CD4-positive, alpha-beta T cell (primary cell): ENCODE measurements at regions of chr14 and their contacts with region 1.

Region 1: DNA sequence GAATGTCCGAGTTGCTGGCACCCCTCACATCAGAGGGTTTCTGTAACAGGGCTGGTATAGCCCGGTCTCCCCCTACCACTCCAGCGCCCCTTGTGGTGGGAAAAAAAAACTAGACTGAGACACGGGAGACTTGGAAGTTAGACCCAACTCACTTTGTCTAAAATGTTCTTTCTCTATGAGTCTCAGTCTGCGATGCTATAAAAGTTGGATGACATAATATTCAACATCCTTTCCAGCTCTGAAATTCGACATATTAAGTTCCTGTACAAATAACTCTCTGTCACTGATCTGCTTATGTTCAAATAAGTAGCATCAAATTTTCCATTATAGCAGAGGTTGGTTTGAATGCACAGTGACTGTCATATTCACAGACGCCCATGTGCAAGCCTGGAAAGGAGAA is 25.7 kb upstream of the TC2N start:
- DNase-seq: peak in 7 of 14 experiments; percentile 18 to 67 (median 35)
- ATAC-seq: peak; percentile 51
- H3K4me3 ChIP-seq: no peak overlapping the region
- H3K4me3 Mint-ChIP-seq: no peak overlapping the region
- H3K27ac ChIP-seq: no peak overlapping the region
- H3K27ac Mint-ChIP-seq: peak overlapping the region; percentile 48
- H3K4me1 ChIP-seq: peaks cover 53% of the 10 kb centered on the region
- H3K4me1 Mint-ChIP-seq: peaks cover 65% of the 10 kb centered on the region
- H3K27me3 ChIP-seq: no peaks in the 10 kb centered on the region
- H3K27me3 Mint-ChIP-seq: no peaks in the 10 kb centered on the region
- CTCF ChIP-seq: no peak

Region 2: DNA sequence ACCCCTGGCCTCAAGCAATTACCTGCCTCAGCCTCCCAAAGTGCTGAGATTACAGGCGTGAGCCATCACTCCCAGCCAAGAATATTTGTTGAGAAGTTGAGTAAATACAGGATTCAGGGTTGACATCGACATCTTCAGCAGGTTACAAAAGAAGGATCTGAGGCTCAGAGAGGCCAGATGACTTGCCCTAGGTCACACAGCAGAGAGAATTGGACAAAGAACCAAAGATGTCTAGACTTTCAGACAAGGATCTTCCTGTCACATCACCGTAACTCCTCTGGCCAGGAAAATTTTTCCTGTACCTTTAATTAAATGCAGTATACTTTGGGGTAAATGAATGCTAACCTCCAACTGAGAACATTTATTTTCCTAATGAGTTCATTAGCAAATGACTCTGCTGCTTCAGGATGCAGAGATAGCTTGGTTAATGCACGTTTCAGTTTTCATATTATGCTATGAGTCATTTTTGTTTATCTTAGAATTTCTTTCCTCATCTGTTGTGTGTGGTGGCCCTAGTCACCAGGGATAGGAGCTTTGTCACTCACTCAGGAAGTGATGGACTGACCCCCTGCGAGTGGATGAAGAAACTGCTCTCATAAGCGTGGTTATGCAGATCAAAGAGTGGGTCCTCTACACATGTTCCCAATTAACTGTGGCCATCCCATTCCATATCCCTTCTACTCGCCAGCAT is 34.6 kb before region 1 on chr14:
- CTCF ChIA-PET with region 1: interaction called, 3 read pairs
- POLR2A ChIA-PET with region 1: interaction called, 28 read pairs
- intact Hi-C with region 1: no loop called
- DNase-seq: peak in 2 of 14 experiments; percentile 32 to 44
- ATAC-seq: peak; percentile 32
- H3K4me3 ChIP-seq: no peak overlapping the region
- H3K4me3 Mint-ChIP-seq: peak overlapping the region; percentile 54
- H3K27ac ChIP-seq: no peak overlapping the region
- H3K27ac Mint-ChIP-seq: peak overlapping the region; percentile 95
- H3K4me1 ChIP-seq: peaks cover 90% of the 10 kb centered on the region
- H3K4me1 Mint-ChIP-seq: peaks cover 96% of the 10 kb centered on the region
- H3K27me3 ChIP-seq: no peaks in the 10 kb centered on the region
- H3K27me3 Mint-ChIP-seq: no peaks in the 10 kb centered on the region
- CTCF ChIP-seq: no peak

Region 3: DNA sequence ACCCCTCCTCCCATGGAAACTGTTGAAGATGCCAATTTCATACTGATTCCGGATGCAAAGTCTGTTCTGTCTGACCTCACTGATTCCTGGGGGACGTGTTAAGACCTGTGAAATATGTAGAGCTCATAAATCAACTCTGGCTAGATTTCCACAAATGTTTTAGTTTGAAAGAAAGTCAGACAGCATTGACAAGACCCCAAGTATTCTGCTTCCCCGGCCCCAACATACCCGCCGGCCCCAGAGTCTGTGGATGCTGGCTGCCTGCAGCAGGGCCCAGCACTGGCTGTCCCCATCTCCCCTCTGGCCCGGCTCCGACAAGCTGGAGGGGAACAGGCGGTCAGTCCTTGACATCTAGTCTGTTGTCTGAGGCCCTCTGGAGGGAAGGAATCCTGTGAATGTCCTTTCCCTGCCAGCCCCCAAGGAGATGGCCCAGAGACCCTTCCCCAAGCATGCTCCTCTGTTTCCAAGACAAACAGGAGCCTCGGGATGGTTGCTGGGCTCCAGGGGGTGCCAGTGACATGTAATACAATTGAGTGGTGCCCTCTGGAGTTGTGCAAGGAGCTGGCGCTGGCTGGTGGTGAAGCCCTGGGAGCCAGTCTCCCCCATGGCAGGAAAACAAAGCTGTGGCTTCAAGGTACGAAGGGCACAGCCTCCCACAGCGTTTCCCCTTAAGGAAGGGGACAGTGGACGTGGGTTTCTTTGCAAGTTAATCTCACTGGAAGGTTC is 32.2 kb after region 1 on chr14:
- CTCF ChIA-PET with region 1: no interaction called
- POLR2A ChIA-PET with region 1: no interaction called
- intact Hi-C with region 1: no loop called
- DNase-seq: no peak
- ATAC-seq: no peak
- H3K4me3 ChIP-seq: no peak overlapping the region
- H3K4me3 Mint-ChIP-seq: no peak overlapping the region
- H3K27ac ChIP-seq: no peak overlapping the region
- H3K27ac Mint-ChIP-seq: no peak overlapping the region
- H3K4me1 ChIP-seq: no peaks in the 10 kb centered on the region
- H3K4me1 Mint-ChIP-seq: no peaks in the 10 kb centered on the region
- H3K27me3 ChIP-seq: no peaks in the 10 kb centered on the region
- H3K27me3 Mint-ChIP-seq: no peaks in the 10 kb centered on the region
- CTCF ChIP-seq: no peak

Region 4: DNA sequence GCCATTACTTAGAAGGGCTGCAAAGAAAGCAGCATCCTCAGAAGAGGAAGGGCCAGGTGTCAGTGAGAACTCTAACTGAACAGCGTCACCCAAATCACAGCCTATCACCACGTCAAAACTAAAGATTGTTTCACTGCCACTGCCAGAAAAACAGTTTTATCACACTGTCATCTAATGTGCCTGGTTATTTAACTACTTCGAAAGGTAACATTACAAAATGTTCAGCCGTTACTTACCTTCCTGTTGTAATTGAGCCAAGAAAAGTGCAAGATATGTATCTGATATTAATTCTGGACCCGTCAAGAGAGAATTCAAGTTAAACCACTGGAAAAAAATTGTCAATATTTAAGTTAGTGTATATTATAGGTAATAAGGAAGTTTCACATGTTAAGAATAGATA is 195.5 kb after region 1 on chr14:
- CTCF ChIA-PET with region 1: no interaction called
- POLR2A ChIA-PET with region 1: no interaction called
- intact Hi-C with region 1: no loop called
- DNase-seq: no peak
- ATAC-seq: no peak
- H3K4me3 ChIP-seq: no peak overlapping the region
- H3K4me3 Mint-ChIP-seq: no peak overlapping the region
- H3K27ac ChIP-seq: no peak overlapping the region
- H3K27ac Mint-ChIP-seq: no peak overlapping the region
- H3K4me1 ChIP-seq: no peaks in the 10 kb centered on the region
- H3K4me1 Mint-ChIP-seq: no peaks in the 10 kb centered on the region
- H3K27me3 ChIP-seq: no peaks in the 10 kb centered on the region
- H3K27me3 Mint-ChIP-seq: no peaks in the 10 kb centered on the region
- CTCF ChIP-seq: no peak